PC-9 (cell line): ENCODE measurements at regions of chr16 and their contacts with region 1.

Region 1: GRCh38 chr16:25395528-25395927 is 137.9 kb upstream of the ZKSCAN2 start:
- DNase-seq: no peak
- H3K4me3 ChIP-seq: no peak overlapping the region
- H3K27ac ChIP-seq: no peak overlapping the region
- H3K4me1 ChIP-seq: no peaks in the 10 kb centered on the region
- H3K27me3 ChIP-seq: no peaks in the 10 kb centered on the region
- CTCF ChIP-seq: no peak

Region 2: GRCh38 chr16:25045696-25046381 is 349.7 kb before region 1 on chr16:
- CTCF ChIA-PET with region 1: no interaction called
- POLR2A ChIA-PET with region 1: no interaction called
- intact Hi-C with region 1: no loop called
- DNase-seq: no peak
- H3K4me3 ChIP-seq: no peak overlapping the region
- H3K27ac ChIP-seq: no peak overlapping the region
- H3K4me1 ChIP-seq: peaks cover 39% of the 10 kb centered on the region
- H3K27me3 ChIP-seq: no peaks in the 10 kb centered on the region
- CTCF ChIP-seq: no peak

Region 3: GRCh38 chr16:25366078-25366477 is 29.4 kb before region 1 on chr16:
- CTCF ChIA-PET with region 1: no interaction called
- POLR2A ChIA-PET with region 1: no interaction called
- intact Hi-C with region 1: loop called (anchors 5 kb)
- DNase-seq: no peak
- H3K4me3 ChIP-seq: no peak overlapping the region
- H3K27ac ChIP-seq: no peak overlapping the region
- H3K4me1 ChIP-seq: no peaks in the 10 kb centered on the region
- H3K27me3 ChIP-seq: peaks cover 31% of the 10 kb centered on the region
- CTCF ChIP-seq: no peak